GM12878 (cell line): ENCODE measurements at regions of chr7 and their contacts with region 1.

Region 1: GRCh38 chr7:97104719-97105238 is 12.7 kb upstream of the SDHAF3 start:
- DNase-seq: no peak
- ATAC-seq: peak; percentile 99
- H3K4me3 ChIP-seq: no peak overlapping the region
- H3K27ac ChIP-seq: no peak overlapping the region
- H3K4me1 ChIP-seq: no peaks in the 10 kb centered on the region
- H3K27me3 ChIP-seq: no peaks in the 10 kb centered on the region; a peak in 1 of 4 replicates
- CTCF ChIP-seq: peak; percentile 69 to 92 (median 71); a peak in 5 of 6 replicates
- EP300 ChIP-seq: no peak
- POLR2A ChIP-seq: no peak
- RAD21 ChIP-seq: peak; percentile 84

Region 2: DNA sequence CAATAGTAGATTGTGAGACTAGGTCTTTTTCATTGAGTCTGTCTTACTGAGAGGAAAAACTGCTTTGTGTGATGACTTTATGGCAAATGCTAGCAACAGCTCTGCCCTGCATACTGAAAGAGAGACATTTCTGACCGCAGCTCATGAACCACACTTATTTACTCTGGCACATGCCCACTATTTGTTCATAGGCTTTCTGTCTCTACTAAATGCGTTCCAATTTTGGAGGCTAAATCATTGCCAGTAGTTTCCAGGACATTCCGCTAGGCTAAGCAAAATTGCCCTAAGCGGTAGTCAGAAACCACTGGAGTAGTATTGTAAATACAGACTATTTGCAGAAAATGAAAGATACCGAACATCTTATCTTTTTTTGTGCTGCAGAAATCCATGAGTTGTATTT is 155.0 kb before region 1 on chr7:
- CTCF ChIA-PET with region 1: no interaction called
- POLR2A ChIA-PET with region 1: no interaction called
- RAD21 ChIA-PET with region 1: no interaction called
- SMC1A ChIA-PET with region 1: no interaction called
- in situ Hi-C with region 1: no loop called
- intact Hi-C with region 1: no loop called
- DNase-seq: no peak
- ATAC-seq: no peak
- H3K4me3 ChIP-seq: no peak overlapping the region
- H3K27ac ChIP-seq: no peak overlapping the region
- H3K4me1 ChIP-seq: no peaks in the 10 kb centered on the region
- H3K27me3 ChIP-seq: no peaks in the 10 kb centered on the region
- CTCF ChIP-seq: no peak
- EP300 ChIP-seq: no peak
- POLR2A ChIP-seq: no peak
- RAD21 ChIP-seq: no peak

Region 3: DNA sequence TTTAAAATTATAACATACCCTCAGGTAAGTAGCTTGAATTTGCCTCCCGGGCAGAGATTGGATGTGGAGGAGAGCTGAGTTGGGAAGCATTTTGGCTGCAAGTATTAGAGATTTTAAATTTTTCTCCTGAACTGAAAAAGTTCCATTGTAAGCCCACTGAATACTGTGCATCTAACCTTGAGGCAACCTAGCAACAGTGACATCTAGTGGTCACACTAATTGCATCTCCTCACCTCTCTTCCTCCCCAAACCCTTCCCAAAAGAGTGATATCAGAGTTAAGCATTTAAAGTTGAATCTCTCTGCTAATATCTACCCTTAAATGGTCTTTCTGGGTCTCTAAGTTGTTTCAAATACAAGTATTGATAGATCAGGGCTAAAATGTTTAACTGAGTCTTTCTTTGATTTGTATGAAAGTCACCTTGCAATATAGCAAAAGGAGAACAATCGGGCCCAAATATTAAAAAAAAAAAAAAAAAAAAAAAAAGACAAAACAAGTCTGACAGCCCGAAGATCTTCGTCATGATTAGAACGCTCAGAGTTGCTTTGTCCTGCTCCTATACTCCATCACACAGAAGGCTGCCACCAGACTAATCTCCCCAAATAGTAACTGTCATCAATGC is 39.7 kb before region 1 on chr7:
- CTCF ChIA-PET with region 1: interaction called, 10 read pairs
- POLR2A ChIA-PET with region 1: no interaction called
- RAD21 ChIA-PET with region 1: no interaction called
- SMC1A ChIA-PET with region 1: no interaction called
- in situ Hi-C with region 1: no loop called
- intact Hi-C with region 1: no loop called
- DNase-seq: no peak
- ATAC-seq: peak; percentile 96
- H3K4me3 ChIP-seq: no peak overlapping the region
- H3K27ac ChIP-seq: no peak overlapping the region
- H3K4me1 ChIP-seq: no peaks in the 10 kb centered on the region
- H3K27me3 ChIP-seq: no peaks in the 10 kb centered on the region
- CTCF ChIP-seq: peak; percentile 57 to 70 (median 68)
- EP300 ChIP-seq: no peak
- POLR2A ChIP-seq: no peak
- RAD21 ChIP-seq: peak; percentile 37; the same call in 1 of the 2 replicates

Region 4: GRCh38 chr7:97117372-97118188 is 12.8 kb after region 1 on chr7 and contains the start of gene SDHAF3:
- CTCF ChIA-PET with region 1: interaction called, 11 read pairs
- POLR2A ChIA-PET with region 1: interaction called, 3 read pairs
- RAD21 ChIA-PET with region 1: interaction called, 5 read pairs
- SMC1A ChIA-PET with region 1: interaction called, 9 read pairs
- in situ Hi-C with region 1: no loop called
- intact Hi-C with region 1: no loop called
- DNase-seq: peak; percentile 90
- ATAC-seq: peak; percentile 94
- H3K4me3 ChIP-seq: peak within 1 kb of the TSS; percentile 93
- H3K27ac ChIP-seq: peak within 1 kb of the TSS; percentile 75
- H3K4me1 ChIP-seq: peaks cover 8% of the 10 kb centered on the region; the same call in 1 of the 2 replicates
- H3K27me3 ChIP-seq: no peaks in the 10 kb centered on the region
- CTCF ChIP-seq: peak in 2 of 3 experiments; percentile 15 to 20; a peak in 2 of 6 replicates
- EP300 ChIP-seq: no peak
- POLR2A ChIP-seq: peak; percentile 97
- RAD21 ChIP-seq: no peak
- polyA plus RNA-seq, gene SDHAF3: 101 to 124 TPM

Region 5: DNA sequence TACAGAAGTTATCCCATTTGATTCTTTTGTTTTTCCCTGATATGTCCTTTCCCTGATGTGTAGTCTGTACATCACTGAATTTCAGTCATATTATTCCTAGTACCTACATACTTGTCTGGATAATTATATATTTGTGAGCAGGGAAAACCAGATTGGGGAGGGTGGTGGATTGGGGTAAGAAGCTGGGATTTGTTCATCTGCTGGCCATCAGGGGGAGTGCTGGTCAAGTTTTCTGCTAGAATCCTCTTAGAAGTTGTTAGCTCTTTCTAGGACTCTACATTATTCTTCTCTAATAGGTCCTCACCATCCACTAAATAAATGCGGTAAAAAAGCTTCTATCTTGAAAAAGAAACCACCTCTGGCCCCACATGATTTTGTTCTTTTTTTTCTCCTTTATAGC is 394.4 kb after region 1 on chr7:
- CTCF ChIA-PET with region 1: interaction called, 3 read pairs
- POLR2A ChIA-PET with region 1: no interaction called
- RAD21 ChIA-PET with region 1: no interaction called
- SMC1A ChIA-PET with region 1: interaction called, 3 read pairs
- in situ Hi-C with region 1: no loop called
- intact Hi-C with region 1: loop called (anchors 5 kb)
- DNase-seq: no peak
- ATAC-seq: peak; percentile 86
- H3K4me3 ChIP-seq: no peak overlapping the region
- H3K27ac ChIP-seq: no peak overlapping the region
- H3K4me1 ChIP-seq: no peaks in the 10 kb centered on the region
- H3K27me3 ChIP-seq: no peaks in the 10 kb centered on the region
- CTCF ChIP-seq: peak; percentile 61 to 76 (median 61); a peak in 5 of 6 replicates
- EP300 ChIP-seq: no peak
- POLR2A ChIP-seq: no peak
- RAD21 ChIP-seq: peak; percentile 62

Region 6: GRCh38 chr7:97845622-97846203 is 740.9 kb after region 1 on chr7:
- CTCF ChIA-PET with region 1: interaction called, 10 read pairs
- POLR2A ChIA-PET with region 1: no interaction called
- RAD21 ChIA-PET with region 1: interaction called, 3 read pairs
- SMC1A ChIA-PET with region 1: interaction called, 3 read pairs
- in situ Hi-C with region 1: no loop called
- intact Hi-C with region 1: loop called (anchors 2 kb)
- DNase-seq: no peak
- ATAC-seq: peak; percentile 67
- H3K4me3 ChIP-seq: no peak overlapping the region
- H3K27ac ChIP-seq: no peak overlapping the region
- H3K4me1 ChIP-seq: no peaks in the 10 kb centered on the region
- H3K27me3 ChIP-seq: no peaks in the 10 kb centered on the region
- CTCF ChIP-seq: peak; percentile 16 to 43 (median 20); a peak in 2 of 6 replicates
- EP300 ChIP-seq: no peak
- POLR2A ChIP-seq: no peak
- RAD21 ChIP-seq: peak; percentile 51